Right lobe of liver (tissue), 6 donors: ENCODE measurements at regions of chr19 and their contacts with region 1.

Region 1: DNA sequence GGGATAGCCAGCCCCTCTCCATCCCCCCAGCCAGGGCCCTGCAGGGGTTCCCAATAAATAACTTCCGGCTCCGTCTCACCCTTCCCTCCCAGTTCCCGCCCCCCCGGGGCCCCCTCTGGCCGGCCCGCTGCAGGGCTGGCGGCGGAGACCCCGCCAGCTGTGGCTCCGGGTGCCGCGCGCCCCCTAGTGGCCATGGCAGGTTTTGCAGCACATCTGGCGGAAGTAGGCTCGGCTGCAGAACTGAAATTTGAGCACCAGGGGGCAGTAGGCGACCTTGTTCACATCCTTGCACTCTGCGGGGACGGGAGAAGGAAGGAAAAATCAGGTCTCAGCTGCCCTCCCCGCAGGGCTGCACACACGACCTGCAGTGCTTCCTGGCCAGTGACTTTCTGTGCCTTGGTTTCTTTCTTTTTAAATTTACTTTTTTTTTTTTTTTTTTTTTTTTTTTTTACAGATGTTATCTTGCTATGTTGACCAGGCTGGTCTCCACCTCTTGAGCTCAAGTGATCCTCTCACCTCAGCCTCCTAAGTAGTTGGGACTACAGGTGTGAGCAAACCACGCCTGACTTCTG is 3.6 kb upstream of the MYO1F start:
- DNase-seq: peak; percentile 84 to 88 (median 86)
- ATAC-seq: peak; percentile 75 to 85 (median 78)
- H3K4me3 ChIP-seq: no peak overlapping the region
- H3K27ac ChIP-seq: no peak overlapping the region
- H3K4me1 ChIP-seq: peaks cover 0 to 10% (median 0%) of the 10 kb centered on the region in 4 donors
- H3K27me3 ChIP-seq: no peaks in the 10 kb centered on the region
- CTCF ChIP-seq: peak; percentile 97 to 100 (median 99)
- POLR2A ChIP-seq: no peak

Region 2: GRCh38 chr19:8641908-8642547 is 61.2 kb after region 1 on chr19:
- intact Hi-C with region 1: loop called in 1 of 2 experiments (anchors 5 kb)
- DNase-seq: no peak
- ATAC-seq: peak; percentile 31 to 46 (median 43)
- H3K4me3 ChIP-seq: no peak overlapping the region
- H3K27ac ChIP-seq: peak overlapping the region in 1 of 3 donors; percentile 85
- H3K4me1 ChIP-seq: peaks cover 0 to 49% (median 22%) of the 10 kb centered on the region in 4 donors
- H3K27me3 ChIP-seq: no peaks in the 10 kb centered on the region
- CTCF ChIP-seq: peak; percentile 54 to 82 (median 70)
- POLR2A ChIP-seq: no peak